Left colon (tissue), 2 donors: ENCODE measurements at regions of chr2 and their contacts with region 1.

Region 1: GRCh38 chr2:203650860-203651613 is 55.4 kb upstream of the CD28 start:
- DNase-seq: peak; percentile 48 to 77
- ATAC-seq: peak; percentile 86

Region 2: DNA sequence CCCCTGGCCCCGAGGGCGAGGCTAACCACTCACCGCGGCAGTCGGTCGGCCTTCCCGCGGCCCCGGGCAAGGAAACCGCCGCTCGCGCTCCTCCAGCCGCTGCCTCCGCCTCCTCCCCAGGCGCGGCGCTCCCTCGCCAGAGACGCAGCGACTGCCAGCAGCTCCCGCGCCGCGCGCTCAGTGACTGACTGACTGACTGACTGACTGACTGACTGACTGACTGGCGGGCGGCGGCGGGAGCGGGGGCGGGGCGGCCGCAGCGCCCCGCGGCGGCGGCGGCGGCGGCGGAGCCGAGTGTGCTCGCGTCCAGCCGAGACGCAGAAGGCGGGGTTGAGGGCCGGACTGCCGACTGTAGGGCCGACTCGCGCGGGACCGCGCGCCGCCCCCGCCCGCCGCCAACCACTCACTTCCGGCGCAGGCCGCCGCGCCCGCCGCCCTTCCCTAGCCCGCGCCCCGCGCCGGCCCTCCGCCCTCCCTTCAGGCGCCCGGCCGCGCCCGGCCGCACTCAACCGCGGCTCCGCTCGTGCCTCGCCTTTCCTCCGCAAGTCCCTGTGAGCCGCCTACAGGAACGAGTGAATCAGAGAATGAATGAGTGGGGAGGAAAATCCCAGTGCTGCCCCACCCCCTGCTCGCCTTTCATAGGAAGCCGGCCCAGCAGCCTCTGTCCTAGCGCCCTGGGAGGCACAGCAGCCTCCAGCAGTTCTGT is 115.8 kb before region 1 on chr2 and contains the start of gene RAPH1:
- intact Hi-C with region 1: loop called in 1 of 2 experiments (anchors 10 kb)
- DNase-seq: peak; percentile 88 to 91
- ATAC-seq: peak; percentile 89
- total RNA-seq, gene RAPH1: 47.4 to 55.1 TPM

Region 3: GRCh38 chr2:203948733-203949132 is 297.7 kb after region 1 on chr2:
- intact Hi-C with region 1: no loop called
- DNase-seq: no peak
- ATAC-seq: no peak